ENCODE measurements at regions of chr6 and their contacts with region 1.

Region 1: DNA sequence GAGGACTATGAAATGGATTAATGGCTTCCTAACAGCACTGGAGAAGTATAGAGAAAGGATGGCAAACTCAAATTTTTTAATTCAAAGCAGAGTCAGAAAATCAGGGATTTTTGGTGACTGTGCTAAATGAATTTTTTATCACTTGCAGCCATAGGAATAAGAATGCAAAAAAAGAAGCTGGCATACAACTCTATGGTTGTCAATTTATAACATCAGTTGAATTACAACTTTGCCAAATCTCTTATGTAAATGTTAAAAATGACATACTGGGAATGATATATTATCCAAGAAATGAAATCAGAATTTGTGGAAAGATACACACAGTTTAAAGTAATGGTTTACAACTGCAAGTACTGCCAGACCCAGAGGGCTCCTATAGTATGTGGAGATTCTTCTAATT is 106.5 kb downstream of the HTR1B start:
- DNase-seq: no peak
- ATAC-seq: no peak
- H3K4me3 ChIP-seq: no peak overlapping the region
- H3K27ac ChIP-seq: no peak overlapping the region
- H3K4me1 ChIP-seq: no peaks in the 10 kb centered on the region
- H3K27me3 ChIP-seq: no peaks in the 10 kb centered on the region
- CTCF ChIP-seq: no peak

Region 2: GRCh38 chr6:77286541-77286940 is 70.3 kb before region 1 on chr6:
- intact Hi-C with region 1: loop called in 1 of 10 experiments (anchors 2 kb)
- DNase-seq: no peak
- ATAC-seq: no peak
- H3K4me3 ChIP-seq: no peak overlapping the region
- H3K27ac ChIP-seq: no peak overlapping the region
- H3K4me1 ChIP-seq: no peaks in the 10 kb centered on the region
- H3K27me3 ChIP-seq: no peaks in the 10 kb centered on the region
- CTCF ChIP-seq: no peak